Activated CD8-positive, alpha-beta T cell treated with anti-CD3 and anti-CD28 coated beads for 36 hours (primary cell): ENCODE measurements at regions of chr10 and their contacts with region 1.

Region 1: GRCh38 chr10:124403548-124403947 is 15.2 kb downstream of the OAT start:
- DNase-seq: peak; percentile 48
- ATAC-seq: peak; percentile 99
- H3K4me3 Mint-ChIP-seq: no peak overlapping the region
- H3K27ac Mint-ChIP-seq: peak overlapping the region; percentile 51
- H3K4me1 Mint-ChIP-seq: peaks cover 4% of the 10 kb centered on the region
- H3K27me3 Mint-ChIP-seq: no peaks in the 10 kb centered on the region
- CTCF ChIP-seq: peak; percentile 68

Region 2: GRCh38 chr10:124418726-124419501 is 15.4 kb after region 1 on chr10 and contains the start of gene OAT:
- CTCF ChIA-PET with region 1: interaction called, 45 read pairs
- POLR2A ChIA-PET with region 1: no interaction called
- intact Hi-C with region 1: no loop called
- DNase-seq: peak; percentile 99
- ATAC-seq: peak; percentile 99
- H3K4me3 Mint-ChIP-seq: peak within 1 kb of the TSS; percentile 81
- H3K27ac Mint-ChIP-seq: peak within 1 kb of the TSS; percentile 64
- H3K4me1 Mint-ChIP-seq: peaks cover 16% of the 10 kb centered on the region
- H3K27me3 Mint-ChIP-seq: peaks cover 4% of the 10 kb centered on the region
- CTCF ChIP-seq: no peak
- total RNA-seq, gene OAT: 40.2 to 44.3 TPM